ENCODE measurements at regions of chr17 and their contacts with region 1.

Region 1: GRCh38 chr17:60664022-60664421 is 13.6 kb upstream of the BCAS3 start:
- DNase-seq: no peak
- H3K4me3 ChIP-seq: no peak overlapping the region
- H3K27ac ChIP-seq: no peak overlapping the region
- H3K4me1 ChIP-seq: no peaks in the 10 kb centered on the region
- H3K27me3 ChIP-seq: no peaks in the 10 kb centered on the region
- CTCF ChIP-seq: no peak
- EP300 ChIP-seq: no peak
- POLR2A ChIP-seq: no peak
- RAD21 ChIP-seq: no peak

Region 2: GRCh38 chr17:60677308-60678124 is 13.5 kb after region 1 on chr17 and contains the start of gene BCAS3:
- CTCF ChIA-PET with region 1: interaction called, 3 read pairs
- POLR2A ChIA-PET with region 1: interaction called, 13 read pairs
- DNase-seq: peak; percentile 93 to 95
- H3K4me3 ChIP-seq: peak within 1 kb of the TSS; percentile 67 to 96 (median 80)
- H3K27ac ChIP-seq: peak within 1 kb of the TSS; percentile 43; the same call in 1 of the 2 replicates
- H3K4me1 ChIP-seq: peaks cover 0 to 2% (median 0%) of the 10 kb centered on the region in 4 experiments; a peak in 4 of 7 replicates
- H3K27me3 ChIP-seq: no peaks in the 10 kb centered on the region
- CTCF ChIP-seq: no peak
- EP300 ChIP-seq: no peak
- POLR2A ChIP-seq: peak; percentile 79 to 80; a peak in 2 of 3 replicates
- RAD21 ChIP-seq: no peak
- total RNA-seq, gene BCAS3: 11.7 and 13.3 TPM in 2 replicates